MCF 10A (cell line): ENCODE measurements at regions of chr4 and their contacts with region 1.

Region 1: GRCh38 chr4:24753500-24753899 is 41.9 kb upstream of the SOD3 start:
- DNase-seq: peak; percentile 88
- H3K4me3 Mint-ChIP-seq: no peak overlapping the region
- H3K27ac Mint-ChIP-seq: peak overlapping the region; percentile 57
- H3K4me1 Mint-ChIP-seq: peaks cover 7% of the 10 kb centered on the region
- H3K27me3 Mint-ChIP-seq: no peaks in the 10 kb centered on the region
- CTCF ChIP-seq: no peak

Region 2: DNA sequence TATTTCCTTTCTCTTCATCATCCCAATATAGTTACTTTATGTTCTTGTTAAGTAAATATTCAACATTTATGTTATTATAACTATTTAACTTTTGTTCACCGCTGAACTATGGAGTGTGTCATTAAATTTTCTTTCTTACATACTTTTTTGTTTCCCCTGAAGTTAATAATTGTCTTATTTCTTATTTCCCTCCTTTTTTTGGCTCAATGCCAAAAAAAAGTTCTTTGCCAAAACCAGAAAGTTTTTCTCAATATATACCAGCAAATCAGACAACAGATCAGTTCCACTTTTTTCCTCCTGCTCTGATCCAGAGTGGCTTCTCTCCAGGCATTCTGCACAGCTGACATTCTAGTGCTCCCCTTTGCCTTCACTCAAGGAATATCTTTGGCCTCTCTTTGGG is 676.7 kb before region 1 on chr4:
- CTCF ChIA-PET with region 1: no interaction called
- POLR2A ChIA-PET with region 1: no interaction called
- intact Hi-C with region 1: no loop called
- DNase-seq: no peak
- H3K4me3 Mint-ChIP-seq: no peak overlapping the region
- H3K27ac Mint-ChIP-seq: no peak overlapping the region
- H3K4me1 Mint-ChIP-seq: peaks cover 6% of the 10 kb centered on the region
- H3K27me3 Mint-ChIP-seq: no peaks in the 10 kb centered on the region
- CTCF ChIP-seq: no peak

Region 3: GRCh38 chr4:24363751-24364150 is 389.7 kb before region 1 on chr4:
- CTCF ChIA-PET with region 1: no interaction called
- POLR2A ChIA-PET with region 1: no interaction called
- intact Hi-C with region 1: no loop called
- DNase-seq: no peak
- H3K4me3 Mint-ChIP-seq: no peak overlapping the region
- H3K27ac Mint-ChIP-seq: no peak overlapping the region
- H3K4me1 Mint-ChIP-seq: no peaks in the 10 kb centered on the region
- H3K27me3 Mint-ChIP-seq: no peaks in the 10 kb centered on the region
- CTCF ChIP-seq: no peak

Region 4: GRCh38 chr4:24765376-24765988 is 12.0 kb after region 1 on chr4:
- CTCF ChIA-PET with region 1: no interaction called
- POLR2A ChIA-PET with region 1: interaction called, 19 read pairs
- intact Hi-C with region 1: no loop called
- DNase-seq: no peak
- H3K4me3 Mint-ChIP-seq: no peak overlapping the region
- H3K27ac Mint-ChIP-seq: peak overlapping the region; percentile 47
- H3K4me1 Mint-ChIP-seq: peaks cover 20% of the 10 kb centered on the region
- H3K27me3 Mint-ChIP-seq: no peaks in the 10 kb centered on the region
- CTCF ChIP-seq: no peak